ENCODE measurements at regions of chr2 and their contacts with region 1.

Region 1: GRCh38 chr2:152437276-152438108 is 102.5 kb downstream of the FMNL2 start:
- DNase-seq: no peak
- ATAC-seq: no peak
- H3K4me3 ChIP-seq: no peak overlapping the region
- H3K27ac ChIP-seq: no peak overlapping the region
- H3K4me1 ChIP-seq: no peaks in the 10 kb centered on the region
- H3K27me3 ChIP-seq: no peaks in the 10 kb centered on the region
- CTCF ChIP-seq: no peak
- POLR2A ChIP-seq: no peak
- RAD21 ChIP-seq: no peak

Region 2: DNA sequence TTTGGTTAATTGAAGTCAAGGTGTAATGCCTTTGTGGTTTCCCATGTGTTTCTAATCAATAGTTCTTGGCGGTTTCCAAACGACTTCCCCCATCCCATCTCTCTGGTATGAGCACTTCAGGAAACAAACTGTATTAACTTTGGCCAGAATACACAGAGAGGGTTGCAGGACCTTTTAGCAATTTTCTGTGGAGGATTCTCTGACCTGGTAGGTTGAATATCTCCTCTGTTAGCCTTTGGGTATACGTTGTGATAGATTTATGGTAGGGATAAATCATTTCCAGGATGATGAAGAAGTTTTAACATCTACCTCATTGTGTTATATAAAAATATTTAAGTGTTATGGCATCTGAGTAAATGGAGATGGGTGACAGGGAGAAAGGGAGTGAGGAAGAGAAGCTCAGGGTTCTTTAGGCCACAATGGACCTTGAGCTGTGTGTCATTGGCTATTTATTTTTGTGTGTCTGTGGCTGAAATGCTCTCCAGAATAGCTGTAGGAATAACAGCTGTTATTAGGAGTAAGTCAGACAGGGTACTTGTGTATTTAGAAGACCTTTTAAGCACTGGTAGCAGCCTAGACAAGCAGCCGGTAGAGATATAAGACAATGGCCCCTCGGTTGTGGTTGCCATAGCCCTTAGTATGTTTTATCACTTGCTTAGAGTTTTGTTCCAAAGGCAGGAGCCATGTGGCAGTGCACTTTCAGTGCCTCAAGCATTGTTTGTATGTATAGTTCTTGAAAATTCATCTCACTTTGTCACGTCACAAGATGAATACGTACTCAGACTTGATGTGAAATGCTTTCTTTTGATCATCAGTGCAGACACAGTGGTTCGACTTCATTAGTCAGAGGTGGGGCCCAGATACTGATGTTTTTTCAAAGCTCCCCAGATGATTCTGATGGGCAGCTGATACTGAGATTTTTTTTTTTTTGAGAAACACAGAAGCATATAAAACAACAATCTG is 11.4 kb before region 1 on chr2:
- CTCF ChIA-PET with region 1: no interaction called
- POLR2A ChIA-PET with region 1: interaction called, 3 read pairs
- dilution Hi-C with region 1: no loop called
- in situ Hi-C with region 1: no loop called
- intact Hi-C with region 1: loop called (anchors 1 kb)
- DNase-seq: no peak
- ATAC-seq: no peak
- H3K4me3 ChIP-seq: no peak overlapping the region
- H3K27ac ChIP-seq: no peak overlapping the region
- H3K4me1 ChIP-seq: peaks cover 10% of the 10 kb centered on the region
- H3K27me3 ChIP-seq: no peaks in the 10 kb centered on the region
- CTCF ChIP-seq: no peak
- POLR2A ChIP-seq: no peak
- RAD21 ChIP-seq: no peak